Panc1 (cell line): ENCODE measurements at regions of chr1 and their contacts with region 1.

Region 1: GRCh38 chr1:229363723-229364122 is 20.9 kb upstream of the CCSAP start:
- DNase-seq: no peak
- ATAC-seq: no peak
- H3K4me3 ChIP-seq: no peak overlapping the region
- H3K27ac ChIP-seq: no peak overlapping the region
- H3K4me1 ChIP-seq: no peaks in the 10 kb centered on the region
- H3K27me3 ChIP-seq: peaks cover 13% of the 10 kb centered on the region
- CTCF ChIP-seq: no peak

Region 2: DNA sequence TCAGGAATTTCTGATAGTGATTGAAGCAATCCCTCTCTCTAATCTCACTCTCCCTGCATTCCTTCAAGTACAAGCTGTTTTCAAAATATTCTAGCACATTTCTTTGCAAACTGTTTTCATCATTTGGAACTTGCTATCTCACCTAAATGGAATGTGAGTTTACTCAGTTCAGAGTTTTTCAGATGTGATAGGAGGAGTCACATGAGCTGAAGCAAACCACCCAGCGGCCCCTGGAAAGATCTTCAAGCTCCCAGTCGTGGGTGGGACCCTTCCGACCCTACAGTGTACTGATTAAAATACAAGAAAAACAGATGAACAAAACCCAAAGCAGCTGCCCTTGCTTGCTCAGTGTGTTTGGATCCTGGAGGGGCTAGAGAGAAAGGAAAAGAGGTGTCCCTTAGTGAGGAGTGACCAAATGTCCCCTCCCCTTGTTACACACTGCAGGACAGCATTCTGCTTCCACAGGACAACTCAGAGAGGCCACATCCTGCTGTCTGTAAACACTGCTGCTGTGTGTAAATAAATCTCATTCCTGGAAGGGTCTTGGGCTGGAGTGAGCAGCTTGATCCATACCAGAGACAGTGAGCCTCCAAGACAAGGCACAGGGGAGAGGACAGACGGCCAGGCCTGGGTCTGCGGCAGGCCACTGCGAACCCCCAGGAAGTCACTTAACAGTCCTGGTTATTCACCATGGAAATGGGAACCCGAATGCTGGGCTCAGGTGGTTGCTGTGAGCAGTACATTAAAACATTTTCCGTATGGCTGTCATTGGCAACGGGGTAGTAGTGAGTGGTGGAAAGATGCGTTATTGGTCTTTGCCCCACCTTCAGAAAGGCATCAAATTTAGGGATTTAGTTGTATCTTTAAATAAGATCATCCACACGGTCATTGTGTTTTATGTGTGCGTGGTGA is 399.3 kb before region 1 on chr1:
- CTCF ChIA-PET with region 1: no interaction called
- POLR2A ChIA-PET with region 1: no interaction called
- in situ Hi-C with region 1: no loop called
- intact Hi-C with region 1: no loop called
- DNase-seq: peak; percentile 81
- ATAC-seq: peak; percentile 91
- H3K4me3 ChIP-seq: 0 out of 4 replicates have a peak overlapping the region, but pooled peaks of 1 of the 2 experiments have one; percentile 14
- H3K27ac ChIP-seq: peak overlapping the region; percentile 3; the same call in 1 of the 2 replicates
- H3K4me1 ChIP-seq: no peaks in the 10 kb centered on the region
- H3K27me3 ChIP-seq: no peaks in the 10 kb centered on the region
- CTCF ChIP-seq: no peak

Region 3: DNA sequence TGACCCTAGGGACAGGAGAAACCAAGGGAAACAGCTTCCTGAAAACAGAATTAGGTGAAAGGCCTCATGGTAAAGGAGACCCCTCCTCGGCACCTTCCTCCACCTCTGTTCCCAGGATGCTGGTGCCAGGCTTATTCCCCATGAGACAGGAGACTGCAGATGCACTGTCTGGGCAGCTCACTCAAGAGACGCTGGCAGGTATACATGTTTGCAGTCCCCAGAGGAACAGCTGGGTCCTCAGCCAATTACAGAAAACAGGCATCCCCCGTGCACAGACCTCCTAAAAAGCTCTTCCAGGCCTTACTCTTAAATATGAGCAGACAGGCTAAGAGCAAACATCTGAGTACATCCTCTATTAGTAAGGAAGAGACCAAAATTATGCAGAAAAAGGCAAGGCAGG is 27.4 kb before region 1 on chr1:
- CTCF ChIA-PET with region 1: interaction called, 11 read pairs
- POLR2A ChIA-PET with region 1: no interaction called
- in situ Hi-C with region 1: no loop called
- intact Hi-C with region 1: no loop called
- DNase-seq: no peak
- ATAC-seq: no peak
- H3K4me3 ChIP-seq: no peak overlapping the region
- H3K27ac ChIP-seq: no peak overlapping the region
- H3K4me1 ChIP-seq: peaks cover 19% of the 10 kb centered on the region
- H3K27me3 ChIP-seq: no peaks in the 10 kb centered on the region
- CTCF ChIP-seq: no peak